Activated T-helper 2 cell treated with anti-CD3 and anti-CD28 coated beads, Interferon-gamma antibody, Interleukin-2, Interleukin-4, amounts not matched to agents 10 μg/mL and 5 μg/mL and 100 μg/mL, durations not matched to agents 14 hours and 24 hours and 36 hours (primary cell): ENCODE measurements at regions of chr7 and their contacts with region 1.

Region 1: DNA sequence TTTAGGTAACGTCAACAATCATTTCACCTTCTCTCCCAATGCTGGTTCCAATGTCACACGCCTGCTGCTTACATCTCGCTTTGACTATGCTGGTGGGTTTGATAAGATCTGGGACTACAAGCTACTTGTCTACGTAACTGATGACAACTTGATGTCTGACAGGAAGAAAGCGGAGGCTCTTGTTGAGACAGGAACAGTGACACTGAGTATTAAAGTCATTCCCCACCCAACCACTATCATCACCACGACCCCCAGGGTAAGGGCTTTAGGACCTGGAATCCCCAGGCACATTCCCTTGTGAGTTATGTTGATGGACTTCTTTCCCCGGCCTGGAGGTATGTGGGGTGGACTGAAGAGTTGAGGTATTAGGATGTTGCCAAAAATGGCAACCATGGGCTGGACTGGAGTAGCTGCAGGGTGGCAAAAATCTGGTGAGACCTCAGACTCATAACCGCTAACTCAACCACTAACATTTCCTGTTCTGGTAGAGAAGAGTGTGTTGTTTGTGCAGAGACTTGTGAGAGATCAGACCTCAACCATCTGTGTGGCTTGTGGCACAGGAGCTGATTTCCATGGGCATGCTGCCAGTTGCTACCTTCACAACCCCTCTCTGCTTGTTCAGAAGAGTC is 59.2 kb downstream of the CDHR3 start:
- DNase-seq: peak; percentile 68
- H3K4me3 Mint-ChIP-seq: peak overlapping the region; percentile 6
- H3K27ac Mint-ChIP-seq: peak overlapping the region; percentile 85
- H3K4me1 Mint-ChIP-seq: peaks cover 53% of the 10 kb centered on the region
- H3K27me3 Mint-ChIP-seq: peaks cover 7% of the 10 kb centered on the region

Region 2: GRCh38 chr7:104943502-104944343 is 1078.6 kb before region 1 on chr7:
- intact Hi-C with region 1: loop called (anchors 5 kb)
- DNase-seq: peak; percentile 78
- H3K4me3 Mint-ChIP-seq: peak overlapping the region; percentile 97
- H3K27ac Mint-ChIP-seq: peak overlapping the region; percentile 99
- H3K4me1 Mint-ChIP-seq: peaks cover 50% of the 10 kb centered on the region
- H3K27me3 Mint-ChIP-seq: no peaks in the 10 kb centered on the region

Region 3: GRCh38 chr7:105769901-105770628 is 252.2 kb before region 1 on chr7:
- intact Hi-C with region 1: loop called (anchors 5 kb)
- DNase-seq: no peak
- H3K4me3 Mint-ChIP-seq: no peak overlapping the region
- H3K27ac Mint-ChIP-seq: no peak overlapping the region
- H3K4me1 Mint-ChIP-seq: peaks cover 38% of the 10 kb centered on the region
- H3K27me3 Mint-ChIP-seq: no peaks in the 10 kb centered on the region

Region 4: DNA sequence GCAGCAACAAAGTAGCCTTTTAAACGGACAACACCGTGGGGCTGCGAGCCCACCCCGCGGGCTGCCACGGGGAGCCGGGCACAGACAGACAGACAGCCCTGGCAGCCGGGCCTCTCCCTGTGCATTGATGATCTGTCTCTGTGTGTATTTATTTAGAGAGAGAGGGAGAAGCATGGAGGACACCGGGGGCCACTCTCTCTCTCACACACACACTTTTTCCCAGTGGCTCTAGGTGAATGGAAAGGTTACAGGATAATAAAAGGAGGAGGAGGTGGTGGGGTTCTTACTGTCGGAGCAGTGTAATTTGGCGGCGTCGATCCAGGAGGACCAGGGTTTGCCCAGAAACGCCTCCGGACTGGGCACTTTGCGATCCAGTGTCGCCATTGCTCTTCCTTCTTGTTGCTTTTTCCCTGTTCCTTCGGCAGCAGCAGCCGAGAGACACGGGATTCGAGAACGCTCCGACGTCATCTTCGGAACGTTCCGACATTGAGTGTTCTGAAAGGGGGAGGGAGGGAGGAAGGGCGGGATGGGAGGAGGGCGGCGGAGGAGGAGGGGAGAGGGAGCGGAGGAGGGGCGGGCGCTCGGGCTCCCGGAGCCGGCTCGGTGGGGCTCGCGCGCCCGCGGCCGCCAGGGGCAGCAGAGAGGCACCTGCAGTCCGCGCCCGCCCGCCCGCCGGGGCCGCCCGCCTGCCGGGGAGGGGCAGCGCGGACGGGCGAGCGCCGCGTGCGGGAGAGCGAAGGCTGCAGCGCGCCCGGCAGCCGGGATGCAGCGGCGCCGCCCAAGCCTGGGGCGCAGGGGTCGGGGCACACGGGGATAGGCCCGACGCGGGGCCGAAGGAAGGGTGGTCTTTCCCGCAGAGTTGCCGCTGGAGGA is 146.0 kb before region 1 on chr7 and contains the start of gene ATXN7L1:
- intact Hi-C with region 1: loop called (anchors 2 kb)
- DNase-seq: peak; percentile 81
- H3K4me3 Mint-ChIP-seq: peak within 1 kb of the TSS; percentile 93
- H3K27ac Mint-ChIP-seq: peak within 1 kb of the TSS; percentile 87
- H3K4me1 Mint-ChIP-seq: peaks cover 45% of the 10 kb centered on the region
- H3K27me3 Mint-ChIP-seq: peaks cover 18% of the 10 kb centered on the region
- total RNA-seq, gene ATXN7L1: 11.1 and 12.4 TPM in 2 replicates

Region 5: GRCh38 chr7:106009403-106010226 is 12.7 kb before region 1 on chr7:
- intact Hi-C with region 1: loop called (anchors 1 kb)
- DNase-seq: peak; percentile 75
- H3K4me3 Mint-ChIP-seq: no peak overlapping the region
- H3K27ac Mint-ChIP-seq: no peak overlapping the region
- H3K4me1 Mint-ChIP-seq: peaks cover 14% of the 10 kb centered on the region
- H3K27me3 Mint-ChIP-seq: peaks cover 31% of the 10 kb centered on the region